ENCODE measurements at regions of chr17 and their contacts with region 1.

Region 1: DNA sequence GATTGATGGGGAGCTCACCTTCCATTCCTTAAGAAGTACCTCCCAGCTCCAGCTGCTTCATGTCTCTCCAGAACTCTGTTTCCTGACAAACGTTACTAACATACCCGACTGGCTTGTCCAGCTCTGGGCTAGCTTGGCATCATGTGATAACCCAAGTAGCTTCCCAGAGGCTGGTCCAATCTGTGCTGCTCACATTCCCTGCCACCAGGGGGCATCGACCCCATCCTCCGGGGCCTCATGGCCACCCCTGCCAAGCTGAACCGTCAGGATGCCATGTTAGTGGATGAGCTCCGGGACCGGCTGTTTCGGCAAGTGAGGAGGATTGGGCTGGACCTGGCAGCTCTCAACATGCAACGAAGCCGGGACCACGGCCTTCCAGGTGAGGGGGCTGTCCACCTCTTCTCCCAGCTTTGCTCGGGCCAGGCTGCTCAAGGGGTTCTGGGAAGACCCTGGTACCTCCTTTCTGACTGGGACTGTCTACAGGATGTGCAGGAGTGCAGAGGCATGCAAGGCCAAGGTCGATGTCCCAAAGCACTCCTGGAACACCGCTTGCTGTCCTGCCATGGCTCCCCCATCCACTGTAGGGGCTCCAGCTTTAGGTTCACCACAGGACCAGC is 7.6 kb downstream of the EPX start:
- DNase-seq: peak; percentile 83
- ATAC-seq: peak; percentile 96
- H3K4me3 Mint-ChIP-seq: no peak overlapping the region
- H3K27ac Mint-ChIP-seq: no peak overlapping the region
- H3K4me1 Mint-ChIP-seq: no peaks in the 10 kb centered on the region
- H3K27me3 Mint-ChIP-seq: peaks cover 11% of the 10 kb centered on the region
- CTCF ChIP-seq: peak; percentile 61; the same call in 1 of the 2 replicates

Region 2: GRCh38 chr17:58148609-58149008 is 51.5 kb before region 1 on chr17:
- CTCF ChIA-PET with region 1: no interaction called
- POLR2A ChIA-PET with region 1: no interaction called
- DNase-seq: no peak
- ATAC-seq: no peak
- H3K4me3 Mint-ChIP-seq: no peak overlapping the region
- H3K27ac Mint-ChIP-seq: no peak overlapping the region
- H3K4me1 Mint-ChIP-seq: no peaks in the 10 kb centered on the region
- H3K27me3 Mint-ChIP-seq: peaks cover 68% of the 10 kb centered on the region
- CTCF ChIP-seq: no peak

Region 3: DNA sequence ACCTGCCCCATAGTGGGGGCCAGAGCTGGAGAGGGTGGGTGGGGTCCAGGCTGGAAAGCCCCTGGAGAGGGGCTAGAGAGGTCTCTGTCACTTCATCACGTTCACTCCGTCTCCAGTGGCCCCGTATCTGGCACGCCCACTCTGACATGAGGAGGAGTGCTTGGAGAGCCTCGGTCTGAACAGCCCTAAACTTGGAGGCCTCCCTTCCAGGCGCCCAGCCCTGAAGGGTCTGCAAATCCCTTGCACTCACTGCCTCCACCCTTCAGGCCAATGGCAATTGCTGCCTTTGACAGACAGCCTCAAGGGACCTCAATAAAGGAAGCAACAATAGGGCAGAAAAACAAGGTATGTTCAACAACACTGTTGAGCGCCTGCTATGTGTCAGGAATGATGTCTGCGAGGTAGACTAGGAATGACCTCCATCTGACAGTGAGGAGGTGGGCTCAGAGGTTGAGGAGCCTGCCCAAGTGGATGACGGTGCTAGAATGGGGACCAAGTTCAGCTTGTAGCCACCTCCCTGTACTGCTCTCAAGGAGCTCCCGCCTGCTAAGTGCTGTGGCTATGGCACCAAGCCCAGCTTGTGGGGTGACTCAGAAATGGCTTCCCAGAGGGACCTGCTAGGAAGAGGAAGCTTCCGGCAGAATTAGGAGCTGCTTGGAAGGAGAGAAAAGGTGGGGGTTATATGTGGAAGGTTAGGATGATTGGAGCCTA is 10.5 kb before region 1 on chr17:
- CTCF ChIA-PET with region 1: interaction called, 10 read pairs
- POLR2A ChIA-PET with region 1: no interaction called
- DNase-seq: no peak
- ATAC-seq: no peak
- H3K4me3 Mint-ChIP-seq: no peak overlapping the region
- H3K27ac Mint-ChIP-seq: no peak overlapping the region
- H3K4me1 Mint-ChIP-seq: peaks cover 9% of the 10 kb centered on the region
- H3K27me3 Mint-ChIP-seq: peaks cover 6% of the 10 kb centered on the region; the same call in 1 of the 2 replicates
- CTCF ChIP-seq: no peak

Region 4: DNA sequence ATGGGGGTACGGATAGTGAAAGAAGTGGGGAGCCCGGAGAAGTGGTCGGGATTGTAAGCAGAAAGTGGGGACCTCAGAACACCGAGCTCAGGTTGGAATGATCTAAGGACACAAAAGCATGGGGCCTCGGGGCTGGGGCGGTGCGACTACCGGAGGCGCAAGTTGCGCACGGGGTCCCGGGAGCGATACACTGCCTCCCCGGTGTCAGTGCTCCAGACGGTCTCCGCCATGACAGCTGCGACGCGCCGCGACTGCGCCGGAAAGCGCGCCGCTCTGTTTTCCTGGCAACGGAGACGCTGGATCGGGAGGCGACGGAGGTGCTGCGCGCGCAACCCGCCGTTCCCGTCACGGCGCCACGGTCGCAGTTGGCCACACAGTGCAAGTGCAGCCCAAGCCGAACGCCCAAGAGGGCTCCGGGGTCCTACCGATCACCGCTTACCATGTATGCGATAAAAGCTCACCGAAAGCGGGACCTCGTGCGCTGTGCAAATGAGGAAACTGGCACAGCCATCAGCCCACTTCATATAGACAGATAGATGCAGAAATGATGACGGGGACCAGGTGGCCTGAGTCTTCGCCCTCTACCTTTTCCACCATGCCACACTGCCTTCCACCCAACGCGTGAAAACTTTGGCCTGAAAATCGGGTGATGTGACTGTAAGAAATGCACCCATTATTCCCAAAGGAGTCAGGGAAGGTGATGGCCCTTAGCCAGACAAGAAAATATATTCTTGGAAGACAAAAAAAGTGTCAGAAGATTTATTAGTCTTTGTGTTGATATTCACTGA is 19.1 kb after region 1 on chr17 and contains the start of gene MKS1:
- CTCF ChIA-PET with region 1: interaction called, 29 read pairs
- POLR2A ChIA-PET with region 1: no interaction called
- DNase-seq: peak; percentile 97
- ATAC-seq: peak; percentile 100
- H3K4me3 Mint-ChIP-seq: peak within 1 kb of the TSS; percentile 93
- H3K27ac Mint-ChIP-seq: peak within 1 kb of the TSS; percentile 92
- H3K4me1 Mint-ChIP-seq: peaks cover 9% of the 10 kb centered on the region
- H3K27me3 Mint-ChIP-seq: peaks cover 30% of the 10 kb centered on the region
- CTCF ChIP-seq: no peak
- total RNA-seq, gene MKS1: 18.6 to 24.2 TPM (median 18.9 TPM) in 3 replicates

Region 5: DNA sequence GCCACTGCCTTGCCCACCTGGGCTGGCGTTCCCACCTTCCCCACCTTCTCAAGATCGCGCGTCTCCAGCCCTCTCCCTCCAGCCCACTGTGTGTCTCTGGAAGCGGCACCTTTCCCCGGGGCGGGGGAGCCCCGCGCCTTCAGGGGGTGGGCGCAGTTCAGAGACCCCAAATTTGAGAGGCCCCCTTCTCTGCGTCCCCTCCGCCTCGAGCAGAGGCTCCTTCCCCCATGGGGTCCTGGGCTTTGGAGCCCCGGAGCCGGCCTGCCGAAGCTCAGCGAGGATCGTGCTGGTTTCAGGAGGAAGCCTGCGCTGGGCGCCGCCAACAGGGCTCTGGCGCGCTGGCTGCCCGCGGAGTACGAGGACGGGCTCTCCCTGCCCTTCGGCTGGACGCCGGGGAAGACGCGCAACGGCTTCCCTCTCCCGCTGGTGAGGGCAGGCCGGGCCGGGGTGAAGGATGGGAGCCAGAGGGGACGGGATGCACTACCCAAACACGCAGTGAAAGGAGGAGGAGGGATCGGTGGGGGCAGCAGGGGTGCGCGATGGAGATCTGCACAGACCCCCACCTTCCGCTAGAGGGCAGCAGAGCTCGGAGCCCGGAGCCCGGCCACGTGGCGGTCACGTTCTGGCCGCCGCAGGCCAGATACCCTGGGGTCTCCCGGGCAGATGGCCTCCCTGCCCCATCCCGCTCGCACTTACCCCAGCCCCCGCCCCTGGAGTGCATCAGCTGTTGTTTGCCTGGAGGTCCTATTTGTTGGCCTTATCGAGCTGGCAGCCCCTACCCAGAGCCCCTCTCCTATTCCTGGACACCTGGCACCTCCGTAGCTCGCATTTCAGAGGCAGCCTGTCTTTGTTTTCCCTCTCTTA is 49.4 kb after region 1 on chr17:
- CTCF ChIA-PET with region 1: interaction called, 31 read pairs
- POLR2A ChIA-PET with region 1: no interaction called
- DNase-seq: peak; percentile 82
- ATAC-seq: peak; percentile 84
- H3K4me3 Mint-ChIP-seq: peak overlapping the region; percentile 56
- H3K27ac Mint-ChIP-seq: no peak overlapping the region
- H3K4me1 Mint-ChIP-seq: peaks cover 11% of the 10 kb centered on the region
- H3K27me3 Mint-ChIP-seq: peaks cover 94% of the 10 kb centered on the region
- CTCF ChIP-seq: peak; percentile 98

Region 6: GRCh38 chr17:58447039-58447975 is 247.2 kb after region 1 on chr17:
- CTCF ChIA-PET with region 1: interaction called, 12 read pairs
- POLR2A ChIA-PET with region 1: no interaction called
- DNase-seq: peak; percentile 89
- ATAC-seq: peak; percentile 98
- H3K4me3 Mint-ChIP-seq: no peak overlapping the region
- H3K27ac Mint-ChIP-seq: no peak overlapping the region
- H3K4me1 Mint-ChIP-seq: peaks cover 18% of the 10 kb centered on the region
- H3K27me3 Mint-ChIP-seq: no peaks in the 10 kb centered on the region
- CTCF ChIP-seq: peak; percentile 66